CD8-positive, alpha-beta memory T cell (primary cell): ENCODE measurements at regions of chr6 and their contacts with region 1.

Region 1: DNA sequence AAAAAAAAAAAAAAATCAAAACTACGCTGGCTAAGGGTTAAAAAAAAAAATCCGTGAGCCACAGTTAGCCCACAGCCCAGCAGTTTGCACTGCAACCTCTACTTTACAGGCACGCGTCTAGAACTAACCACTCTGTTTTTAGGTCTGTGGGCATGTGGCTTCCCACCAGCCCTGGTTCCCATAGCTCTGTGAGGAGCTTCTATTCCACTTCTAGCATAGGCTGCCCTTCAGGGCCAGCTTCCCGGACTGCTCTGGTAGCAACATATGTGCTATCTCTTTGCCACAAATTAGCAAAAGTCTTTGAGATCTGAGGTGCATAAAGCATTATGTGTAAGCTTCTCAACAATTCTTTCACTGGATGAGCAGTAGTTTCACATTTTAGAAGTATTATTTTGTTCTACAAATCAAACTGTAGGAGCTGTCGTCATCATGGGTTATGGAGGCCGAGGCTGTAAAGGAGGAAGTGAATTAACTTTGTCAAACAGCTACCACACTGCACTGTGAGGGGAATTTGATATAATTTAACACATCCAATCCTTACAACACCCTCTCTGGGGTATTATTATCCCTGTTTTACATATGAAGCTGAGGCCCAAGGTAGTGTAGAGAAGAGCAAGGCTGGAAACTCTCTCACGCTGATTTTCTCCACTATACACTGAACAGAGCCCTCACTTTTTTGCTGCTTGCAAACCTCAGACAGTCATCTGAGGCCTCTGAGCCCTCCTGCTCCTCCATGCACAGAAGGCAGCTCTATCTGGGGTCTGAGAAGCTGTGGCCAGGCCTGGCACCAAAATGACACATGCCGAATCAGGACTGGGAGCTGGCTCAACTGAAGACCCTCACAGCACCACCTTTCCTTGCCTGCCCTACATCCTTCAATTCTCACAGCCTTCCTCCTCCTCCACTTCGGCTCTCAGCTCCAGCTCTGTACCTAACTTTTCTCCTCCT is 35.4 kb downstream of the MAN1A1 start:
- DNase-seq: peak; percentile 40 to 75 (median 57)
- H3K4me3 ChIP-seq: peak overlapping the region; percentile 30
- H3K4me3 Mint-ChIP-seq: peak overlapping the region; percentile 62 to 89 (median 74)
- H3K27ac ChIP-seq: peak overlapping the region; percentile 69
- H3K27ac Mint-ChIP-seq: peak overlapping the region; percentile 92 to 99 (median 98)
- H3K4me1 ChIP-seq: peaks cover 50% of the 10 kb centered on the region
- H3K4me1 Mint-ChIP-seq: peaks cover 66 to 89% (median 81%) of the 10 kb centered on the region in 3 donors
- H3K27me3 ChIP-seq: no peaks in the 10 kb centered on the region
- H3K27me3 Mint-ChIP-seq: no peaks in the 10 kb centered on the region

Region 2: GRCh38 chr6:119349323-119350042 is 35.3 kb after region 1 on chr6 and contains the start of gene MAN1A1:
- CTCF ChIA-PET with region 1: interaction called, 8 read pairs
- POLR2A ChIA-PET with region 1: interaction called, 33 read pairs
- DNase-seq: peak; percentile 81 to 93 (median 89)
- H3K4me3 ChIP-seq: peak within 1 kb of the TSS; percentile 78
- H3K4me3 Mint-ChIP-seq: peak within 1 kb of the TSS; percentile 95 to 99 (median 97)
- H3K27ac ChIP-seq: peak within 1 kb of the TSS; percentile 85
- H3K27ac Mint-ChIP-seq: peak within 1 kb of the TSS; percentile 80 to 97 (median 89)
- H3K4me1 ChIP-seq: peaks cover 12% of the 10 kb centered on the region
- H3K4me1 Mint-ChIP-seq: peaks cover 45 to 67% (median 61%) of the 10 kb centered on the region in 3 donors
- H3K27me3 ChIP-seq: no peaks in the 10 kb centered on the region
- H3K27me3 Mint-ChIP-seq: peaks cover 0 to 1% of the 10 kb centered on the region in 2 donors
- total RNA-seq, gene MAN1A1: 36.9 to 38.4 TPM

Region 3: DNA sequence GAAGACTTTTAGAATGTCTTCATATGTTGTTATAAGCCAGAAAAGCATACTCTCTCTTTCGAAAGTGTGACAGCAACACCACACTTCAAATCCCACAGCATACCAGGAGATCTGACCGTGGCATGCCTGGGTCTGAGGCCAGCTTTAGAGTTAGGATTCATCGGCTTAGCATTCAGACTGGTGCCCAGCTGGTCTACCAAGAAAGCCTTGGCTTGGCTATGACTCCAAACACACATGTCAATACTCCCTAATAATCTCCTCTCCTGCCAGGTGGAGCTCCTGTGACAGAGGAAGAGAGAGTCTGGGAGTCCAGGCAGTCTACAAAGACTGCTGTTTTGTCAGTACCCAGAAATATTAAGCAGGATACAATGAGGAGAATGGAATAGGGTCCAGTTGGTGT is 112.4 kb after region 1 on chr6:
- CTCF ChIA-PET with region 1: no interaction called
- POLR2A ChIA-PET with region 1: no interaction called
- DNase-seq: no peak
- H3K4me3 ChIP-seq: no peak overlapping the region
- H3K4me3 Mint-ChIP-seq: no peak overlapping the region
- H3K27ac ChIP-seq: no peak overlapping the region
- H3K27ac Mint-ChIP-seq: no peak overlapping the region
- H3K4me1 ChIP-seq: no peaks in the 10 kb centered on the region
- H3K4me1 Mint-ChIP-seq: no peaks in the 10 kb centered on the region
- H3K27me3 ChIP-seq: no peaks in the 10 kb centered on the region
- H3K27me3 Mint-ChIP-seq: peaks cover 0 to 2% of the 10 kb centered on the region in 2 donors